Naive thymus-derived CD4-positive, alpha-beta T cell (primary cell): ENCODE measurements at regions of chrX and their contacts with region 1.

Region 1: GRCh38 chrX:49191033-49191871 is 5.1 kb upstream of the PRICKLE3 start:
- DNase-seq: peak; percentile 43 to 95 (median 90)
- ATAC-seq: peak; percentile 92
- H3K4me3 ChIP-seq: peak overlapping the region; percentile 96
- H3K4me3 Mint-ChIP-seq: peak overlapping the region; percentile 86 to 95 (median 92)
- H3K27ac ChIP-seq: peak overlapping the region; percentile 82
- H3K27ac Mint-ChIP-seq: peak overlapping the region; percentile 77 to 98 (median 94)
- H3K4me1 ChIP-seq: peaks cover 0 to 15% of the 10 kb centered on the region in 2 donors
- H3K4me1 Mint-ChIP-seq: peaks cover 11 to 41% (median 26%) of the 10 kb centered on the region in 7 donors
- H3K27me3 ChIP-seq: no peaks in the 10 kb centered on the region
- H3K27me3 Mint-ChIP-seq: no peaks in the 10 kb centered on the region

Region 2: GRCh38 chrX:47836164-47837072 is 1354.8 kb before region 1 on chrX and contains the start of gene ZNF81:
- CTCF ChIA-PET with region 1: no interaction called
- POLR2A ChIA-PET with region 1: no interaction called
- intact Hi-C with region 1: loop called in 1 of 2 experiments (anchors 5 kb)
- DNase-seq: peak; percentile 73 to 91 (median 83)
- ATAC-seq: peak; percentile 96
- H3K4me3 ChIP-seq: peak within 1 kb of the TSS; percentile 67
- H3K4me3 Mint-ChIP-seq: peak within 1 kb of the TSS; percentile 96 to 99 (median 98)
- H3K27ac ChIP-seq: peak within 1 kb of the TSS; percentile 79
- H3K27ac Mint-ChIP-seq: peak within 1 kb of the TSS; percentile 94 to 99 (median 97)
- H3K4me1 ChIP-seq: peaks cover 4 to 6% of the 10 kb centered on the region in 2 donors
- H3K4me1 Mint-ChIP-seq: peaks cover 1 to 36% (median 26%) of the 10 kb centered on the region in 7 donors
- H3K27me3 ChIP-seq: no peaks in the 10 kb centered on the region
- H3K27me3 Mint-ChIP-seq: no peaks in the 10 kb centered on the region
- total RNA-seq, gene ZNF81: 11.0 to 14.7 (median 11.7) TPM

Region 3: DNA sequence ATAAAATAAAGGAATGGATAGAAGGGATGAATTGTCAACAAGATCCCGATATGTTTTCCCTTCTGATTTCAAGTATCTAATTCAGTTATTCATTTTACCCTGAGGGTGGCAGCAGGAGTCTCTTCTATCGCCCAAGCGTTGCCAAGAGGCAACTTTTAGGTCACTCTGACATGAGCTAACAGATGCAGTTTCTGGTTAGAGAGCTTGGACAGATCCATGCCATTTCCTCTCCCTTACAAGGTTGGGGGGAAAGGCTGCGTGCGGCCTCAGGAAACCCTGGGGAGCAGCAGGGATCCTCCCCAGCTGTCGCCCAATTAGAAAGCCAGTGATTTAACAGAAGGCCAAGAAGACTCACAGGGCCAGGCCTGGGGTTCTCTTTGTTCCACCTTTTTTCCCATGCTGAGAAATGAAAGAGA is 542.9 kb before region 1 on chrX:
- CTCF ChIA-PET with region 1: no interaction called
- POLR2A ChIA-PET with region 1: no interaction called
- intact Hi-C with region 1: no loop called
- DNase-seq: peak in 8 of 9 donors; percentile 17 to 54 (median 38)
- ATAC-seq: peak; percentile 70
- H3K4me3 ChIP-seq: no peak overlapping the region
- H3K4me3 Mint-ChIP-seq: no peak overlapping the region
- H3K27ac ChIP-seq: no peak overlapping the region
- H3K27ac Mint-ChIP-seq: peak overlapping the region in 3 of 9 donors; percentile 42 to 58 (median 53)
- H3K4me1 ChIP-seq: no peaks in the 10 kb centered on the region
- H3K4me1 Mint-ChIP-seq: peaks cover 0 to 18% (median 13%) of the 10 kb centered on the region in 7 donors
- H3K27me3 ChIP-seq: no peaks in the 10 kb centered on the region
- H3K27me3 Mint-ChIP-seq: no peaks in the 10 kb centered on the region

Region 4: DNA sequence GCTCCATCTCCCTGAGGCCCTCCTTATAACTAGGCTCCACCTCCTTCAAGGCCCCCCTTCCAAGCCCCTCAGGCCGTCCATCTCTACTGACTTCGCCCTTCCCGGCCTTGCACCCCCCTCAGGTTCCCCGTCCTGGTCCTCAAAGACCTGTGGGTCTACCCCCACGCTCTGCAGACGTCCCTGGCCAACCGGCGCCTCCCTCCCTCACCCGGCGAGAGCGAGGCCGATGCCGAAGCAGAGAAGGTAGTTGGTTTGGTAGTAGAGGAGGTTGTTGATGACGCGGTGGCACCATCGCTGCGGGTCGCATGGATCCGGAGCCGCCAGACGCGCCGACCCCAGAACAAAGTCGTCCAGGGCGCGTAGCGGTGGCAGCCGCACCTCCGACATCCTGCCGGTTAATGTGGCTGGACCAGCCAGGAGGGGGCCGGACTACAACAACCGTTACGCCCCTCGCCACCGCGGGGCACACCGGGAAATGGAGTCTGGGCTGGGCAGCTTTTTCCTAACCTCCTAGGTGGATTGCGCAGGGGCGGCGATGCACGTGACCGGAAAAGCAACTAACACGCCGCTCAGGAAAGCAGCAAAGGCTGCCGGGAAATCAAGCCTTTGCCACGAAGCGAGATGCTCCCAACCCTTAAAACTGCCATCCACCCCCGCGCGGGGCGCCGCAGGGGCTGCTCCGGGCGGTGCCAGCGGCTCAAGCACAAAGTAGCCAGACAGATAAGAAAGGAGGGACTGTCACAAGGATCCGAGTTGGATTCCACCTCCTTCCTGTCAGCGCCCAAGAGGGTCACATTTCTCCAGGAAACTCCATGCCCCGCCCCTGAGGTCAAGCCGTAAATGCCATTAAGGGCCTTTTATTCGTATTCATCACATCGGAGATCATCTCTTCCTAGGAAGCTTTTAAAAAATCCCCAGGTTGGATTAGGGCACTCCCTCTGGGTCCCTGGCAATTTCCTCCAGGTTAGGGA is 117.4 kb before region 1 on chrX and contains the start of gene PRAF2:
- CTCF ChIA-PET with region 1: no interaction called
- POLR2A ChIA-PET with region 1: no interaction called
- intact Hi-C with region 1: loop called in 1 of 2 experiments (anchors 2 kb)
- DNase-seq: peak; percentile 60 to 90 (median 86)
- ATAC-seq: peak; percentile 99
- H3K4me3 ChIP-seq: peak within 1 kb of the TSS; percentile 61
- H3K4me3 Mint-ChIP-seq: peak within 1 kb of the TSS; percentile 73 to 88 (median 83)
- H3K27ac ChIP-seq: peak within 1 kb of the TSS; percentile 78
- H3K27ac Mint-ChIP-seq: peak within 1 kb of the TSS; percentile 66 to 91 (median 86)
- H3K4me1 ChIP-seq: peaks cover 4 to 10% of the 10 kb centered on the region in 2 donors
- H3K4me1 Mint-ChIP-seq: peaks cover 9 to 25% (median 16%) of the 10 kb centered on the region in 7 donors
- H3K27me3 ChIP-seq: no peaks in the 10 kb centered on the region
- H3K27me3 Mint-ChIP-seq: no peaks in the 10 kb centered on the region
- total RNA-seq, gene PRAF2: 15.9 to 28.3 (median 20.4) TPM

Region 5: GRCh38 chrX:49137492-49137891 is 53.8 kb before region 1 on chrX:
- CTCF ChIA-PET with region 1: interaction called, 3 read pairs
- POLR2A ChIA-PET with region 1: interaction called, 4 read pairs
- intact Hi-C with region 1: loop called in 1 of 2 experiments (anchors 1 kb)
- DNase-seq: no peak
- ATAC-seq: no peak
- H3K4me3 ChIP-seq: no peak overlapping the region
- H3K4me3 Mint-ChIP-seq: no peak overlapping the region
- H3K27ac ChIP-seq: no peak overlapping the region
- H3K27ac Mint-ChIP-seq: no peak overlapping the region
- H3K4me1 ChIP-seq: no peaks in the 10 kb centered on the region
- H3K4me1 Mint-ChIP-seq: peaks cover 0 to 2% (median 0%) of the 10 kb centered on the region in 7 donors
- H3K27me3 ChIP-seq: no peaks in the 10 kb centered on the region
- H3K27me3 Mint-ChIP-seq: no peaks in the 10 kb centered on the region

Region 6: DNA sequence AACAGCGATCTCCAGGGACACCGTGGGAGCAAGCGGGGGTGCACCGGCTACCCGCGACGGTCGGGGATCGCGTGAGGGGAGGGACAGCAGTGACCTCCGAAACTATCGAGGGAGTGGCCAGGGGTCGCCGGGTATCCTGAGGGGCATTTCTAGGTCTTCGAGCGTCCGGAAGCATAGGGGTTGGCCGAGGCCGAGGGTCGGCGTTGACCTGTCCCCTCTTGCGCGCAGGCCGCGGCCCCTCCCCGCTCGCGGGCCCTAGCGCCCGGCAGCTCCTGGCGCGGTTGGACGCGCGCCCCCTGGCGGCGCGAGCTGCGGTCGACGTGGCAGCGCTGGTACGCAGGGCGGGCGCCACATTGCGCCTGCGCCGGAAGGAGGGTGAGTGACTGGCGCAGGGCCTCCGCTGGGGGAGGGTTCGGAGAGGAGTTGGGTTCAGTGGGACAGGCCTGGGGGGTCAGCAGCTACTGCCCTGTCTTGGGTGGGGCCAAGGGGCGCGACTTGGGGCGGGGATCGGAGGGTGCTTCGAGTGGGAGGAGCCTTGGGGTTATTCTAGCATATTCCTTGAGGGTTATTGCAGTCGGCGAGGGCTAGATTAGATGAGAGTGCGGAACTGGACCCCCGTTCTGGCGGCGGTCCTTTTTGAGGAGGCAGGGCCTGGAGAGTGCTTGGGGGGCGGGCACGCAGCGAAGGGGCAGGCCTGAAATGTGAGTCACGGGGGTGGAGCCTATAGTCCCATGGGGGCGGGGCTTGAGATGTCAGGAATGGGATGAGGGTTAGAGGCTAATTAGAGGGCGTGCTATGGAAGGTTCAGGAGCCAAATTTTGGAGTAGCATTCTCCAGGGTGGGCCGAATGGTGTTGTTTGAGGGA is 27.5 kb before region 1 on chrX:
- CTCF ChIA-PET with region 1: interaction called, 4 read pairs
- POLR2A ChIA-PET with region 1: interaction called, 13 read pairs
- intact Hi-C with region 1: loop called (anchors 1 to 5 kb)
- DNase-seq: peak; percentile 71 to 84 (median 80)
- ATAC-seq: peak; percentile 74
- H3K4me3 ChIP-seq: peak overlapping the region; percentile 50
- H3K4me3 Mint-ChIP-seq: peak overlapping the region; percentile 72 to 84 (median 81)
- H3K27ac ChIP-seq: peak overlapping the region; percentile 74
- H3K27ac Mint-ChIP-seq: peak overlapping the region; percentile 79 to 97 (median 92)
- H3K4me1 ChIP-seq: peaks cover 14 to 16% of the 10 kb centered on the region in 2 donors
- H3K4me1 Mint-ChIP-seq: peaks cover 13 to 33% (median 26%) of the 10 kb centered on the region in 7 donors
- H3K27me3 ChIP-seq: no peaks in the 10 kb centered on the region
- H3K27me3 Mint-ChIP-seq: peaks cover 0 to under 1% (median 0%) of the 10 kb centered on the region in 5 donors

Region 7: GRCh38 chrX:49230469-49231232 is 39.4 kb after region 1 on chrX:
- CTCF ChIA-PET with region 1: interaction called, 4 read pairs
- POLR2A ChIA-PET with region 1: interaction called, 3 read pairs
- intact Hi-C with region 1: loop called (anchors 1 to 2 kb)
- DNase-seq: peak; percentile 19 to 63 (median 44)
- ATAC-seq: peak; percentile 78
- H3K4me3 ChIP-seq: peak overlapping the region; percentile 28
- H3K4me3 Mint-ChIP-seq: peak overlapping the region; percentile 76 to 87 (median 80)
- H3K27ac ChIP-seq: peak overlapping the region; percentile 71
- H3K27ac Mint-ChIP-seq: peak overlapping the region; percentile 67 to 94 (median 88)
- H3K4me1 ChIP-seq: peaks cover 0 to 4% of the 10 kb centered on the region in 2 donors
- H3K4me1 Mint-ChIP-seq: peaks cover 6 to 26% (median 21%) of the 10 kb centered on the region in 7 donors
- H3K27me3 ChIP-seq: no peaks in the 10 kb centered on the region
- H3K27me3 Mint-ChIP-seq: no peaks in the 10 kb centered on the region

Region 8: GRCh38 chrX:49878834-49879659 is 687.8 kb after region 1 on chrX and contains the start of gene USP27X:
- CTCF ChIA-PET with region 1: interaction called, 3 read pairs
- POLR2A ChIA-PET with region 1: interaction called, 3 read pairs
- intact Hi-C with region 1: loop called in 1 of 2 experiments (anchors 5 kb)
- DNase-seq: peak; percentile 60 to 82 (median 71)
- ATAC-seq: peak; percentile 96
- H3K4me3 ChIP-seq: peak within 1 kb of the TSS; percentile 60
- H3K4me3 Mint-ChIP-seq: peak within 1 kb of the TSS; percentile 81 to 91 (median 86)
- H3K27ac ChIP-seq: peak within 1 kb of the TSS; percentile 65
- H3K27ac Mint-ChIP-seq: peak within 1 kb of the TSS; percentile 63 to 89 (median 74)
- H3K4me1 ChIP-seq: peaks cover 10 to 19% of the 10 kb centered on the region in 2 donors
- H3K4me1 Mint-ChIP-seq: peaks cover 6 to 47% (median 36%) of the 10 kb centered on the region in 7 donors
- H3K27me3 ChIP-seq: no peaks in the 10 kb centered on the region
- H3K27me3 Mint-ChIP-seq: no peaks in the 10 kb centered on the region
- total RNA-seq, gene USP27X: 1.8 to 9.4 (median 3.8) TPM